CD4-positive, alpha-beta memory T cell (primary cell): ENCODE measurements at regions of chr22 and their contacts with region 1.

Region 1: GRCh38 chr22:19629720-19630419 is 84.4 kb upstream of the SEPTIN5 start:
- DNase-seq: peak; percentile 80 to 84 (median 81)
- H3K4me3 ChIP-seq: no peak overlapping the region
- H3K4me3 Mint-ChIP-seq: no peak overlapping the region
- H3K27ac ChIP-seq: no peak overlapping the region
- H3K27ac Mint-ChIP-seq: peak overlapping the region in 2 of 7 donors; percentile 29 to 67
- H3K4me1 ChIP-seq: no peaks in the 10 kb centered on the region
- H3K4me1 Mint-ChIP-seq: peaks cover 0 to 3% (median 1%) of the 10 kb centered on the region in 4 donors
- H3K27me3 ChIP-seq: no peaks in the 10 kb centered on the region
- H3K27me3 Mint-ChIP-seq: peaks cover 2% of the 10 kb centered on the region in 2 donors

Region 2: GRCh38 chr22:19109198-19110067 is 520.4 kb before region 1 on chr22:
- CTCF ChIA-PET with region 1: interaction called, 6 read pairs
- POLR2A ChIA-PET with region 1: no interaction called
- intact Hi-C with region 1: loop called (anchors 1 kb)
- DNase-seq: peak; percentile 75 to 86 (median 82)
- H3K4me3 ChIP-seq: peak overlapping the region; percentile 26 to 29
- H3K4me3 Mint-ChIP-seq: peak overlapping the region; percentile 77 to 89 (median 84)
- H3K27ac ChIP-seq: peak overlapping the region; percentile 80
- H3K27ac Mint-ChIP-seq: peak overlapping the region; percentile 79 to 99 (median 97)
- H3K4me1 ChIP-seq: peaks cover 66% of the 10 kb centered on the region
- H3K4me1 Mint-ChIP-seq: peaks cover 51 to 76% (median 62%) of the 10 kb centered on the region in 4 donors
- H3K27me3 ChIP-seq: no peaks in the 10 kb centered on the region
- H3K27me3 Mint-ChIP-seq: no peaks in the 10 kb centered on the region

Region 3: GRCh38 chr22:19143967-19144400 is 485.9 kb before region 1 on chr22:
- CTCF ChIA-PET with region 1: interaction called, 14 read pairs
- POLR2A ChIA-PET with region 1: interaction called, 7 read pairs
- intact Hi-C with region 1: loop called (anchors 1 kb)
- DNase-seq: peak; percentile 22 to 59 (median 44)
- H3K4me3 ChIP-seq: peak overlapping the region; percentile 86 to 94
- H3K4me3 Mint-ChIP-seq: peak overlapping the region; percentile 96 to 100 (median 98)
- H3K27ac ChIP-seq: peak overlapping the region; percentile 81
- H3K27ac Mint-ChIP-seq: peak overlapping the region; percentile 90 to 99 (median 98)
- H3K4me1 ChIP-seq: peaks cover 12% of the 10 kb centered on the region
- H3K4me1 Mint-ChIP-seq: peaks cover 11 to 25% (median 18%) of the 10 kb centered on the region in 4 donors
- H3K27me3 ChIP-seq: peaks cover 7% of the 10 kb centered on the region
- H3K27me3 Mint-ChIP-seq: peaks cover 2 to 6% of the 10 kb centered on the region in 2 donors

Region 4: GRCh38 chr22:19488884-19489843 is 140.7 kb before region 1 on chr22:
- CTCF ChIA-PET with region 1: interaction called, 23 read pairs
- POLR2A ChIA-PET with region 1: interaction called, 3 read pairs
- intact Hi-C with region 1: no loop called
- DNase-seq: no peak
- H3K4me3 ChIP-seq: no peak overlapping the region
- H3K4me3 Mint-ChIP-seq: no peak overlapping the region
- H3K27ac ChIP-seq: no peak overlapping the region
- H3K27ac Mint-ChIP-seq: no peak overlapping the region
- H3K4me1 ChIP-seq: no peaks in the 10 kb centered on the region
- H3K4me1 Mint-ChIP-seq: peaks cover 0 to 6% (median 3%) of the 10 kb centered on the region in 4 donors
- H3K27me3 ChIP-seq: no peaks in the 10 kb centered on the region
- H3K27me3 Mint-ChIP-seq: no peaks in the 10 kb centered on the region

Region 5: DNA sequence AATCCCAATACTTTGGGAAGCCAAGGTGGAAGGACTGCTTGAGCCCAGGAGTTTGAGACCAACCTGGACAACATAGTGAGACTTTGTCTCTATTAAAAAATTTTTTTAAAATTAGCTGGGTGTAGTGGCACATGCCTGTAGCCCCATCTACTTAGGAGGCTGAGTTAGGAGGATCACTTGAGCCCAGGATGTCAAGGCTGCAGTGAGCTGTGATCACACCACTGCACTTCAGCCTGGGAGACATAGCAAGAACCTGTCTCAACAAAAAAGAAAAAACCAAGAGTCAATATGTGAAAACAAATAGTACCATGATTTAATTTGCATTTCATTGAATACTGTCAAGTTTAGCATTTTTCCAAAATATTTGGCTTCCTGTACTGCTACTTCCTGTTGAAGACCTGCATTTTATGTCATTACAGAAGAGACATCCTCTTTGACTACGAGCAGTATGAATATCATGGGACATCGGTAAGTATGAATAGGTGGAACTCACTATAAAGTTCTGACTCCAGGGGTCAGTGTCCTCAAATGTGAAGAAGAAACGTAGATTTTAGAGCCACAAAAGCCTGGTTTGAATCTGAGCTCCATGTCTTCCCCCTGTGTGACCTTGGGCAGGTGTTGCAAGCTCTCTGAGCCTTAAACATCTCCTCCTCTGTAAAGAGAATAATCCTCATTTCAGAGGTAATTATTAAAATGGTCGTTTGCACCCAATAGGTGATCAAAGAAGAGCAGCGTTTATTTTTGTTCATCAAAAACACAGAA is 134.1 kb before region 1 on chr22:
- CTCF ChIA-PET with region 1: interaction called, 23 read pairs
- POLR2A ChIA-PET with region 1: interaction called, 3 read pairs
- intact Hi-C with region 1: loop called (anchors 1 kb)
- DNase-seq: peak in 4 of 5 donors; percentile 16 to 36 (median 25)
- H3K4me3 ChIP-seq: no peak overlapping the region
- H3K4me3 Mint-ChIP-seq: no peak overlapping the region
- H3K27ac ChIP-seq: no peak overlapping the region
- H3K27ac Mint-ChIP-seq: peak overlapping the region in 3 of 7 donors; percentile 16 to 72 (median 55)
- H3K4me1 ChIP-seq: no peaks in the 10 kb centered on the region
- H3K4me1 Mint-ChIP-seq: peaks cover 4 to 7% (median 6%) of the 10 kb centered on the region in 4 donors
- H3K27me3 ChIP-seq: no peaks in the 10 kb centered on the region
- H3K27me3 Mint-ChIP-seq: no peaks in the 10 kb centered on the region